ENCODE measurements at regions of chr22 and their contacts with region 1.

Region 1: GRCh38 chr22:40950962-40951794 is at the start of gene RBX1:
- DNase-seq: peak; percentile 99
- H3K4me3 ChIP-seq: peak within 1 kb of the TSS; percentile 91
- H3K27ac ChIP-seq: peak within 1 kb of the TSS; percentile 96
- H3K4me1 ChIP-seq: peaks cover 16% of the 10 kb centered on the region
- H3K27me3 ChIP-seq: no peaks in the 10 kb centered on the region
- CTCF ChIP-seq: no peak
- total RNA-seq, gene RBX1: 82.3 and 83.9 TPM in 2 replicates

Region 2: DNA sequence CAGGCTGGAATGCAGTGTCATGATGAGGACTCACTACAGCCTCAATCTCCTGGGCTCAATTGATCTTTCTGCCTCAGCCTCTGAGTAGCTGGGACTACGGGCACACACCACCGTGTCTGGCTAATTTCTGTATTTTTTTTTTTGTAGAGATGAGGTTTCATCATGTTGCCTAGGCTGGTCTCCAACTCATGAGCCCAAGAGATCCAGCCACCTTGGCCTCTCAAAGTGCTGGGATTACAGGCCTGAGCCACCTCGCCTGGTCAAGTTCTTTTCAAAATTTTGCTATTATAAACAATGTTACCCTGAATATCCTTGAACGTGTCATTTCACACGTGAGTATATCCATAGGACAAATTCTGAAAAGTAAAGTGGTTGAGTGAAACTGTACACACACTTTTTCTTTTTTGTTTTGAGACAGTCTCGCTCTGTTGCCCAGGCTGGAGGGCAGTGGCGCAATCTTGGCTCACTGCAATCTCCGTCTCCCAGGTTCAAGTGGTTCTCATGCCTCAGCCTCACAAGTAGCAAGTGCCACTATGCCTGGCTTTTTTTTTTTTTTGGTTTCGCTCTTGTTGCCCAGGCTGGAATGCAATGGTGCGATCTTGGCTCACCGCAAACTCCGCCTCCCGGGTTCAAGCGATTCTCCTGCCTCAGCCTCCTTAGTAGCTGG is 119.6 kb after region 1 on chr22:
- CTCF ChIA-PET with region 1: no interaction called
- POLR2A ChIA-PET with region 1: interaction called, 17 read pairs
- intact Hi-C with region 1: no loop called
- DNase-seq: no peak
- H3K4me3 ChIP-seq: no peak overlapping the region
- H3K27ac ChIP-seq: no peak overlapping the region
- H3K4me1 ChIP-seq: no peaks in the 10 kb centered on the region
- H3K27me3 ChIP-seq: no peaks in the 10 kb centered on the region
- CTCF ChIP-seq: no peak

Region 3: GRCh38 chr22:41091132-41092022 is 140.2 kb after region 1 on chr22:
- CTCF ChIA-PET with region 1: no interaction called
- POLR2A ChIA-PET with region 1: no interaction called
- intact Hi-C with region 1: loop called (anchors 1 kb)
- DNase-seq: peak; percentile 99
- H3K4me3 ChIP-seq: peak overlapping the region; percentile 67
- H3K27ac ChIP-seq: peak overlapping the region; percentile 99
- H3K4me1 ChIP-seq: peaks cover 11% of the 10 kb centered on the region
- H3K27me3 ChIP-seq: no peaks in the 10 kb centered on the region
- CTCF ChIP-seq: no peak

Region 4: GRCh38 chr22:41551877-41552582 is 600.9 kb after region 1 on chr22:
- CTCF ChIA-PET with region 1: interaction called, 14 read pairs
- POLR2A ChIA-PET with region 1: no interaction called
- intact Hi-C with region 1: no loop called
- DNase-seq: no peak
- H3K4me3 ChIP-seq: no peak overlapping the region
- H3K27ac ChIP-seq: no peak overlapping the region
- H3K4me1 ChIP-seq: peaks cover 3% of the 10 kb centered on the region
- H3K27me3 ChIP-seq: no peaks in the 10 kb centered on the region
- CTCF ChIP-seq: no peak